CD14-positive monocyte (primary cell): ENCODE measurements at regions of chr15 and their contacts with region 1.

Region 1: DNA sequence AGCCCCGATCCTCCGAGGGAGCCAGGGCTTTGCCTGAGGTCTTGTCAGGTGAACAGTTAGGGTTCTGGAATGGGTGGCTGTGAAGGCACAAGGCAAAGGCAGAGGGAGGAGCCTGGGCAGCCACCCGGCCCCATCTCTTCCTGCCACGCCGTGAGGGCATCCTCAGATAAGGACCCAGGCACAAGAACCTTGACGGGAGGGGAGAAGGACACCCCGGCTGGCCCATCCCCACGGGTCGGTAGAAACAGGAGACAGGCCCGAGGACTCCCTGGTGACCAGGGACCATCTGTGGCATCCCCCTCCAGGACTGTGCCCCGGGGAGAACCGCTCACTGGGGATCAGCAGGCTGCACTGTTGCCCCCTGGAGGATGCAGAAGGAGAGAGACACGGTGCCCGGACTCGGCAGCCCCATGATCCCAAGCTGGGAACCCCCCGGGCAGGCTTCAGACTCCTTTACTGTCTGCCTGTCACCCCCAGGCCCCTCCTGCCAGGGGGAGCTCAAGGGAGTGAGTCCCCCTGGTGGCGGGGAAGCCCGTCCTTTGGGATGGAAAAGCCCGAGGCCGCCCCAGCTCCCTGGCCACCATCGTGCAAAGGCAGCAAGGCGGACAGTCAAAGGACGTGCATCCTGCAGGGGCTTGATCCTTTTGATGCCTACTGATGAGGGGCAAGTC is 12.3 kb upstream of the PCSK6 start:
- DNase-seq: peak in 2 of 3 donors; percentile 24 to 63
- H3K4me3 ChIP-seq: no peak overlapping the region
- H3K4me3 Mint-ChIP-seq: peak overlapping the region; percentile 39 to 63
- H3K27ac ChIP-seq: no peak overlapping the region
- H3K27ac Mint-ChIP-seq: peak overlapping the region in 2 of 7 donors; percentile 27 to 36
- H3K4me1 ChIP-seq: peaks cover 17 to 19% of the 10 kb centered on the region in 2 donors
- H3K4me1 Mint-ChIP-seq: peaks cover 18% of the 10 kb centered on the region
- H3K27me3 ChIP-seq: peaks cover 0 to 28% of the 10 kb centered on the region in 2 donors
- H3K27me3 Mint-ChIP-seq: peaks cover 40 to 55% (median 52%) of the 10 kb centered on the region in 3 donors
- CTCF ChIP-seq: peak; percentile 73

Region 2: GRCh38 chr15:101303408-101303807 is 198.4 kb before region 1 on chr15:
- intact Hi-C with region 1: loop called in 1 of 2 experiments (anchors 5 kb)
- DNase-seq: no peak
- H3K4me3 ChIP-seq: no peak overlapping the region
- H3K4me3 Mint-ChIP-seq: no peak overlapping the region
- H3K27ac ChIP-seq: no peak overlapping the region
- H3K27ac Mint-ChIP-seq: no peak overlapping the region
- H3K4me1 ChIP-seq: no peaks in the 10 kb centered on the region
- H3K4me1 Mint-ChIP-seq: peaks cover 2% of the 10 kb centered on the region
- H3K27me3 ChIP-seq: no peaks in the 10 kb centered on the region
- H3K27me3 Mint-ChIP-seq: peaks cover 3 to 15% (median 13%) of the 10 kb centered on the region in 3 donors
- CTCF ChIP-seq: no peak

Region 3: DNA sequence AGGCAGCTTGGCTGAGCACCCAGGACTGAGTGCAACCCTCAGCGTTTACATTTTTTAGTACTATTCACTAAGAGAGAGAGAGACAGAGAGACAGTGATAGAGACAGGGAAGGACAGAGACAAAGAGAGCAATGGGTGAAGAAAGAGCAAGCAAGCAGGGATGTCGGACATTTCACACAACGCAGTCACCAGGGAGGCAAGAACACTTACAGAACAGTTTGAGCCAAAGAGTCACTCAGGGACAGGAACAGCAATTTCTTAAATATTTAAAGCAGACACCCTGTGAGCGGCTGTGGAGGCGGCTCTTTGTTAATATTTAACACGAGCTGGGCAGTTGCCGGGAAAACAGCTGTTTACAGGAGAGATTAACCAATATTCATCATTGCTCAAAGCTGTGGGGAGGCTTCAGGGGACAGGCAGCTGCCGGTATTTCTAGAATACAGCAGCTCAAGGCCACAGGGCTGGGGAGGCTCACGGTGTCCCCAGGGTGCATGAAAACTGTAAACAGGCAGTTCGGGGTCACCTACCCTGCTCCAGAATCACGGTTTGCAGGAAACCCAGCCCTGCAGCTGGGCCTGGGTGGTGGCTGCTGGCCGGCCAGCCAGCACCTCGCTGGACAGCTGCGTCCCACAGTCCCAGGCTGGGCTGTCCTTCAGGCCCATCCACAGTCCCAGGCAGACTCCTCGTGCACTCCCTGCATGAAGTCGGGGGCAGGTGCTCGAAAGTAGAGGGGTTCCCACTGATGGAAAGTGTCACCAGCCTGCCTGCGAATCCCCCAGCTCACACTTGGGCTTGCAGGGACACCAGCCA is 26.5 kb after region 1 on chr15:
- intact Hi-C with region 1: no loop called
- DNase-seq: no peak
- H3K4me3 ChIP-seq: no peak overlapping the region
- H3K4me3 Mint-ChIP-seq: no peak overlapping the region
- H3K27ac ChIP-seq: no peak overlapping the region
- H3K27ac Mint-ChIP-seq: no peak overlapping the region
- H3K4me1 ChIP-seq: no peaks in the 10 kb centered on the region
- H3K4me1 Mint-ChIP-seq: no peaks in the 10 kb centered on the region
- H3K27me3 ChIP-seq: no peaks in the 10 kb centered on the region
- H3K27me3 Mint-ChIP-seq: peaks cover 2 to 5% (median 3%) of the 10 kb centered on the region in 3 donors
- CTCF ChIP-seq: no peak